ENCODE measurements at regions of chr1 and their contacts with region 1.

Region 1: GRCh38 chr1:46527474-46528296 is 23.8 kb downstream of the KNCN start:
- DNase-seq: peak; percentile 62
- H3K4me3 Mint-ChIP-seq: no peak overlapping the region
- H3K27ac Mint-ChIP-seq: no peak overlapping the region
- H3K4me1 Mint-ChIP-seq: peaks cover 18% of the 10 kb centered on the region
- H3K27me3 Mint-ChIP-seq: peaks cover 36% of the 10 kb centered on the region

Region 2: GRCh38 chr1:46179138-46180081 is 348.3 kb before region 1 on chr1:
- intact Hi-C with region 1: no loop called
- DNase-seq: peak; percentile 39
- H3K4me3 Mint-ChIP-seq: no peak overlapping the region
- H3K27ac Mint-ChIP-seq: no peak overlapping the region
- H3K4me1 Mint-ChIP-seq: peaks cover under 1% of the 10 kb centered on the region
- H3K27me3 Mint-ChIP-seq: peaks cover 7% of the 10 kb centered on the region

Region 3: DNA sequence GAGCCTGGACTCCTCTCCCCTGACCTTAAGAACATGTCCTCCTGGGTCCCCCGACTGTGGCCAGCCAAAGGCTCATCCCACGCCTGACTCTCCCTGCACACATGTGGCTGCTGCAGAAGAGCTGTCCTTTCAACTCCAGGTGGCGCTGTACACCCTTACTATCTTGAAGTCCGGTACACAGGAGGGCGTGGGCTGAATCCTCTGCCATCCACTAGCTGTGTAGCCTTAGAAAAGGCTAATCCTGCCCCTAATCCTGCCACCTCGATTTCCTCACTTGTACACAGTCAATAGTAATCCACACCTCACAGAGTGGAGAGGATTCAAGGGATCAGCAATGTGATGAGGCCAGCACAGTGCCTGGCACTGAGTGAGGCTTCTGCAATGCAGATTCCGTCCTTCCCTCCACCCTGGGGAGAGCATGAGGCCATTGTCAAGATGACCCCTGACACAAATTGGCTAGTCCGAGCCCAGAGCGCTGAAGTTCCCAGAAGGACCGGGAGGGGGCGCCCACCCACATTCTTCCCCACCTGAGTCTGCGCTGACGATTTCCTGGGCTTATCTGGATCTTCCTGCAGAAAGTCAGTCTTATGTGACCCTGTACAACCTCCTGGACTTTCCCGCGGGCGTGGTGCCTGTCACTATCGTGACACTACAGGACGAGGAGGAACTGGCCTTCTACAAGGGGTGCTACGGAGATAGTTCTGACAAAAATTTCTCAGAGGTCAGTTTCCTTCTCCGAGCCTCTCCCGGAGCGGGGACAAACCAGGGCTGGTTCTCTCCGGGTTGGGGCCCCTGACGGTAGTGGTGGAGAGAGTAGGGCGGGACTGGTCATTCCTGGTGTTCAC is 85.1 kb before region 1 on chr1:
- intact Hi-C with region 1: loop called (anchors 1 kb)
- DNase-seq: peak; percentile 57
- H3K4me3 Mint-ChIP-seq: peak overlapping the region; percentile 75
- H3K27ac Mint-ChIP-seq: peak overlapping the region; percentile 62
- H3K4me1 Mint-ChIP-seq: peaks cover 7% of the 10 kb centered on the region
- H3K27me3 Mint-ChIP-seq: peaks cover 35% of the 10 kb centered on the region

Region 4: GRCh38 chr1:46477153-46477929 is 50.3 kb before region 1 on chr1:
- intact Hi-C with region 1: loop called (anchors 1 kb)
- DNase-seq: peak; percentile 64
- H3K4me3 Mint-ChIP-seq: no peak overlapping the region
- H3K27ac Mint-ChIP-seq: no peak overlapping the region
- H3K4me1 Mint-ChIP-seq: no peaks in the 10 kb centered on the region
- H3K27me3 Mint-ChIP-seq: peaks cover 51% of the 10 kb centered on the region

Region 5: DNA sequence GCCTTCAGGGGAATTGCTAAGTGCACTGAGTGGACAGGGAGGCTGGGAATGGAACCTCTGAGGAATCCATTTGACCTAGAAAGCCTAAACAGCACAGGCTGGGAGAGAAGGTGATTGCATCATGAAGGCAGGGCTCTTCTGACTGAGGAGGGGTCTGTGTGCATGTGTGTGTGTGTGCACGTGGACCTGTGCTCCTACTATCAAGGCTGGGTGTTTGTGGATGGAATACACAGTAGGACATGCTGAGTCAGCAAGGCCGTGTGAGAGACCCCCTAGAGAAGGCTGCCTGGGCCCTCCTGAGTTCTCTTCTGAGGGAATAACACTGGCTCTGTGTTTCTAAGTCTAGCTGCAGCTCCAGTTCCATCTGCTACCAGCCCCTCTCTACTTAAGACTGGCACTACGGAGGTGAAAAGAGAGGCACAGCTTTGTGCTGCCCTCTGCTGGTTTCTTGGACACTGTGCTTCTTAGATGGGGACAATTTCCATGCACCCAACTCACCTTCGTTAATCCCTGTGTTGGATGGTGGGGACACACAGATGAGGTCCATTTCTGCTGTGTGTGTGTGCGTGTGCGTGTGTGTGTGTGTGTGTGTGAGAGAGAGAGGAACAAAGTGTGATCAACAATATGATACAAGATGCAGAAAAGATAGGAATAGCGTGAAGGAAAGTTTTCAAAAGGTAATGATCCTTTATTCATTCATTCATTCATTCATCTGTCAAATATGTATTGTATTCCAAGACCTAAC is 197.5 kb after region 1 on chr1:
- intact Hi-C with region 1: loop called (anchors 1 kb)
- DNase-seq: peak; percentile 60
- H3K4me3 Mint-ChIP-seq: no peak overlapping the region
- H3K27ac Mint-ChIP-seq: no peak overlapping the region
- H3K4me1 Mint-ChIP-seq: peaks cover 2% of the 10 kb centered on the region
- H3K27me3 Mint-ChIP-seq: peaks cover 23% of the 10 kb centered on the region